Thyroid gland (tissue), 4 donors: ENCODE measurements at regions of chr6 and their contacts with region 1.

Region 1: DNA sequence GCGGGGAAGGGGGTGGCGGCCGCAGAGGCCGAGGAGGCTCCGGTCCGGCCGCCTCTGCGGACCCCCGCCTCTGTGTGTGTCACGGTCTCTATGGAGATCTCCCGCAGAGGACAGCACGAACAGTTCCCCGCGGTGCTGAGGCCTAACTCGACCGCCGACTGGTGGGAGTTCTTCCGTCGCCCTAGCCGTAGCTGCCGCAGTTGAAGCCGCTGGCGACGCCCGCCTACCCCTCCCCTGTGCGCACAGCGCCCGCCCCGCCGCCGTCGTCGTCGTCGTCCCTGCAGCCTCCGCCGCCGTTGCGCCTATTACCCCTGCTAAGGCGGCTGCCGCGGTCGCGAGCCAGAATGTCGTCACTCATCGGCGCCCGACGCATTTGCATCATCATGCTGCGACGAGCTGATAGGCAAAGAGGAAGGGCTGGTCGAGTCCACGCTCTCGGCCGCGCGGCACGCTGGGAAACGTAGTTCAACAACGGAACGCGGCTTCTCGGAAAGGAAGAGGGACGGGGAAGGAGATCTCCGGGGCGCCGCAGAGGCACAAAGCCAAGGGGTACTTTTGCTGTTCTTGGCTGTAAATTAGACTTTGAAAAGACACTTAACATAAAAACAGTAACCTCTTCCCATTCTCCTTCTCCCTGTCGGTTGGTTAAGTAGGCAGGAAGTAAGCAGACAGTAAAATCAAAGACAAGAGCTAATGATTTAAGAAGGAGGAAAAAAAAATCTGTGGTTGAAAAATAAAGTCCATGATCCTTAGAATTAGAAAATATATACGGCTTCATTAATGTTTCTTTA is at the start of gene NUP153:
- DNase-seq: peak; percentile 98 to 99
- H3K4me3 ChIP-seq: peak within 1 kb of the TSS; percentile 43 to 91 (median 90)
- H3K27ac ChIP-seq: peak within 1 kb of the TSS; percentile 95 to 98 (median 96)
- H3K4me1 ChIP-seq: peaks cover 24 to 32% of the 10 kb centered on the region in 2 donors
- H3K27me3 ChIP-seq: no peaks in the 10 kb centered on the region
- CTCF ChIP-seq: peak in 1 of 6 experiments; percentile 24
- POLR2A ChIP-seq: peak; percentile 74 to 96
- total RNA-seq, gene NUP153: 38.0 to 58.6 (median 44.9) TPM

Region 2: DNA sequence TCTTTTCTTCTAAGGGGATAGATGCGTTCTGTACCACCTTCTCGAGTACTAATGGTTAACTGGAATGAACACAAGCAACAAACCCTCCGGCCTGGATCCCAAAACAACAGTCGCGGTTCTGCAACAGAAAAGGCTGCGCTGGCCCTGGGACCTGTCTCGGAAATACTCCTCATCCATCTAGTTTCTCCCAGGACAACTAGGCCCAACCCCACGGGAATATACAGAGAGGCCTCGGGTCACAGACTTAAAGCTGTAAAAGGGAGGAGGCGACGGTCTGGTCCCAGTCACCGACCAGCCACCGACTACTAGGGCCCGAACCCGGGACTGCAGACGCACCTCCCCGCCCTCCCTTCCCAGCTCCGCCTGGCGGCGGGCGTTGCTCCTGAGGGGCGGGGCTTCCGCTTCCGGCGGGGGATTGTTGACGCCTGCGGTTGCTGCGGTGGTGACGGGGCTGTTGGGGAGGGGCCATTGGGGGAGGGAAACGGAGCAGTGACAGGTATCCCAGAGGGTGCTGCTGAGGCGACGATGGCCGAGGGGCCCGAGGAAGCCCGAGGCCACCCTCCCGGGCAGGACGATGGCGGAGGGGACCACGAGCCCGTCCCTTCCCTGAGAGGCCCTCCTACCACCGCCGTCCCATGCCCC is 106.8 kb before region 1 on chr6 and contains the start of gene FAM8A1:
- intact Hi-C with region 1: loop called (anchors 10 kb)
- DNase-seq: peak; percentile 96 to 98
- H3K4me3 ChIP-seq: peak within 1 kb of the TSS; percentile 9 to 95 (median 83)
- H3K27ac ChIP-seq: peak within 1 kb of the TSS; percentile 94 to 97 (median 94)
- H3K4me1 ChIP-seq: peaks cover 5 to 8% of the 10 kb centered on the region in 2 donors
- H3K27me3 ChIP-seq: no peaks in the 10 kb centered on the region
- CTCF ChIP-seq: peak; percentile 12 to 74 (median 64)
- POLR2A ChIP-seq: peak; percentile 64 to 82
- total RNA-seq, gene FAM8A1: 45.1 to 57.1 (median 52.3) TPM